ENCODE measurements at regions of chr7 and their contacts with region 1.

Region 1: DNA sequence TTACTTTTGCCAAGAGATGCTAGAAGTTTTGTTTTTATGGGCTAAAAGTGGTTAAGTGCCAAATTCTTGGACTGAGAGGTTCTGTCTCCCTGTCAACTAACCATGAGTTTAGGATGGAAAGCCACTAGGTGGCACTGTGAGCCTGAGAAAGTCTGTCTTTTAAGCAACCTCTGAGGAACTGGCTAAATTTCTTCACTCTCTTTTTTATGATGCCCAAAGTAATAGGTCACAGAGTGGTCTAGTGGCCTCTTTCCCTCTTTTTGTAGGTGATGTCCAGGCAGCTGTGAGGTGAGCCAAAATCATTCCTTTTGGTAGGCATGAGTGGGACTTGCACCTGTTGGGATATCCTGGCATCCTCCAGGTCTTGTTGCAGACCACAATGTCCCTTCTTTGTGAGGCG is 56.8 kb downstream of the SND1 start:
- DNase-seq: peak; percentile 57
- ATAC-seq: peak; percentile 86
- H3K4me3 ChIP-seq: no peak overlapping the region
- H3K27ac ChIP-seq: no peak overlapping the region
- H3K4me1 ChIP-seq: no peaks in the 10 kb centered on the region
- H3K27me3 ChIP-seq: no peaks in the 10 kb centered on the region
- CTCF ChIP-seq: peak; percentile 75
- EP300 ChIP-seq: no peak
- POLR2A ChIP-seq: no peak
- RAD21 ChIP-seq: no peak

Region 2: DNA sequence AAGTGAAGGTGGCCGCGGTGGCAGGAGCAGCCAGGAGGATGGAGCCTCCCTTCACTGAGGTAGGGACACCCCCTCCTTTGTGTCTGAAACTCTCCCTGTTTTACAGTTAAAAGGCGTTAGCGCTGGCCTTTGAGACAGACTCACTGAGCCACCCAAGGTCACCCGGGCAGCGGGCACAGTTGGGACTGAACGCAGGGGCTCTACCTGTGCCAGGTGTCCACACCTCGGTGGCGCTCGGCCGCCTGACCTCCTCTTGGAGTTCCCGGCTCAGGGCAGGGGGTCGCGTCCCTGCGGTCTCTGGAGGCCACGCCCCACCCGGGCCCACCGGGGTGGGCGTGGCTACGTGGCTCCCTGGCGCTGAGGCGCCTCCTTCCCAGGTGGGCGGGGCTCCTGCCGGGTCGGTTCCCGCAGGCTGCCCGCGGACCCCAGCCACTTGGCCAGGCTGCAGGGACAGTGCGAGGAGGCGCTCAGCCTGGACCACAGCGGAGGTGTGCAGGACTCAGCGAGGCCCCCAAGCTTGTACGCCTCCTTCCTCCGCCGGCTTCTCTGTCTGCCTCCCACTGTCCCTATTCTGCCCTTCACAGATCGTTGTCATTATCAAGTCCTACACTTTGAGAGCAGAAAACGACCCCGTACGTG is 492.4 kb after region 1 on chr7:
- CTCF ChIA-PET with region 1: no interaction called
- POLR2A ChIA-PET with region 1: no interaction called
- in situ Hi-C with region 1: loop called (anchors 5 kb)
- intact Hi-C with region 1: no loop called
- DNase-seq: no peak
- ATAC-seq: peak; percentile 18; the same call in 1 of the 3 replicates
- H3K4me3 ChIP-seq: peak overlapping the region in 1 of 3 experiments; percentile 33; a peak in 1 of 6 replicates
- H3K27ac ChIP-seq: no peak overlapping the region
- H3K4me1 ChIP-seq: no peaks in the 10 kb centered on the region
- H3K27me3 ChIP-seq: peaks cover 7 to 59% of the 10 kb centered on the region in 2 experiments; a peak in 4 of 5 replicates
- CTCF ChIP-seq: no peak
- EP300 ChIP-seq: no peak
- POLR2A ChIP-seq: no peak
- RAD21 ChIP-seq: no peak

Region 3: DNA sequence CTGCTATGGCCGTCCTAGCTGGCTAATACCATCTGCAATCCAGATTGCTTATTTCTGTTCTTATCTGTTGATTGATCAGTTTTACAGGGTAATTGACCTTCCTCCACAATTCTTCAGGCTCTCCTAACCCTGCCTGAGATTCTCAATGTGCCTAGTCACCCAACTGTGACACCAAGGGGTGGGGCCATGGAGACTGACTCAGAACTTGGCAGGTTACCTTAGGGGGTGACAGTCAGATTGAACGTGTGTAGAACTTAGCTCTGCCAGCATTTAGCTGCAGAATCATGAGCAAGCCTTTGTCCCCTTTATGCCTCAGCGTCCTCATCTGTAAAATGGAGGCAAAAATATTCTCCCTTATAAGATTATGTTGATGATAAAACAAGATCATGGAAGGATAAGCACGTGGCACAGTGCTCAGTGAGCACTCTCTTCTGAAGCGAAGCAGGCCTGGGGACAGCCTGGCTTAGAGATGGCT is 513.2 kb after region 1 on chr7:
- CTCF ChIA-PET with region 1: no interaction called
- POLR2A ChIA-PET with region 1: no interaction called
- in situ Hi-C with region 1: no loop called
- intact Hi-C with region 1: no loop called
- DNase-seq: no peak
- ATAC-seq: no peak
- H3K4me3 ChIP-seq: no peak overlapping the region
- H3K27ac ChIP-seq: no peak overlapping the region
- H3K4me1 ChIP-seq: no peaks in the 10 kb centered on the region
- H3K27me3 ChIP-seq: peaks cover 5 to 34% of the 10 kb centered on the region in 2 experiments; a peak in 3 of 5 replicates
- CTCF ChIP-seq: no peak
- EP300 ChIP-seq: no peak
- POLR2A ChIP-seq: no peak
- RAD21 ChIP-seq: no peak

Measured in HepG2 (cell line).